ENCODE measurements at regions of chr7 and their contacts with region 1.

Region 1: GRCh38 chr7:93779115-93779514 is 111.4 kb downstream of the TFPI2 start:
- DNase-seq: no peak
- H3K4me3 ChIP-seq: no peak overlapping the region
- H3K27ac ChIP-seq: no peak overlapping the region
- H3K4me1 ChIP-seq: no peaks in the 10 kb centered on the region
- H3K27me3 ChIP-seq: no peaks in the 10 kb centered on the region
- CTCF ChIP-seq: no peak

Region 2: DNA sequence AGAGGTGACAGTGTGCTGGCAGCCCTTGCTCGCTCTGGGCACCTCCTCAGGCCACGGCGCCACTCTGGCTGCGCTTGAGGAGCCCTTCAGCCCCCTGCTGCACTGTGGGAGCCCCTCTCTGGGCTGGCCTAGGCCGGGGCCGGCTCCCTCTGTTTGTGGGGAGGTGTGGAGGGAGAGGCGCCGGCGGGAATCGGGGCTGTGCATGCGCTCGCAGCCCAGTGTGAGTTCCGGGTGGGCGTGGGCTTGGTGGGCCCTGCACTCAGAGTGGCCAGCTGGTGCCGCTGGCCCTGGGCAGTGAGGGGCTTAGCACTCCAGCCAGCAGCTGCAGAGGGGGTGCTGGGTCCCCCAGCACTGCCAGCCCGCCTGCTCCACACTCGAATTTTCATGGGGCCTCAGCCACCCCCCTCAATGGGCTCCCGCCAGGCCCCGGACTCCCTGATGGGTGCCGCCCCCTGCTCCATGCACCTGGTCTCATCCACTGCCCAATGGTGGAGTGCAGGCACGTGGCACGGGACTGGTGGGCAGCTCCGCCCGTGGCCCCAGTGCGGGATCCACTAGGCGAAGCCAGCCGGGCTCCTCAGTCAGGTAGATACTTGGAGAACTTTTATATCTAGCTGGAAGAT is 321.7 kb after region 1 on chr7:
- CTCF ChIA-PET with region 1: no interaction called
- POLR2A ChIA-PET with region 1: interaction called, 20 read pairs
- intact Hi-C with region 1: no loop called
- DNase-seq: no peak
- H3K4me3 ChIP-seq: no peak overlapping the region
- H3K27ac ChIP-seq: no peak overlapping the region
- H3K4me1 ChIP-seq: no peaks in the 10 kb centered on the region
- H3K27me3 ChIP-seq: no peaks in the 10 kb centered on the region
- CTCF ChIP-seq: no peak

Measured in PC-9 (cell line).